ENCODE measurements at regions of chr1 and their contacts with region 1.

Region 1: GRCh38 chr1:201119206-201120197 is 7.3 kb upstream of the CACNA1S start:
- DNase-seq: peak; percentile 53
- CTCF ChIP-seq: peak; percentile 53

Region 2: DNA sequence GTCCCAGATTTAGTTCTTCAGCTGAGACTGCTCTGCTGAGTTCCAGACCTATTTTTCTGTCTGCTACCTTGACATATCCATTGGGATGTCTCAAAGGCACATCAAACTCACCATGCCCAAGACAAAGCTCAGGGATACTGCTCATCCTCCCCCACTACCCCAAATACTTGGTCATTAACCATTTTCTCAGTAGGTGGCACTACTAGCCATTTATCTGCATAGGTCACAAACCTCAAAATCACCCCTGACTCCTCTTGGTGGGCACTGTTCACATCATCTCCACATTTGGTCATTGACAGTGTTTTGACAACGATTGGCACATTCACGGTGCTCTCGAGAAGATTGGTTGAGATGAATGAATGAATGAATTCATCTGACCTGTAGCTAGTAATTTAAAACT is 39.4 kb before region 1 on chr1:
- CTCF ChIA-PET with region 1: interaction called, 59 read pairs
- POLR2A ChIA-PET with region 1: no interaction called
- DNase-seq: no peak
- CTCF ChIP-seq: no peak

Region 3: GRCh38 chr1:201108614-201109013 is 10.9 kb before region 1 on chr1:
- CTCF ChIA-PET with region 1: interaction called, 12 read pairs
- POLR2A ChIA-PET with region 1: no interaction called
- DNase-seq: no peak
- CTCF ChIP-seq: no peak

Region 4: DNA sequence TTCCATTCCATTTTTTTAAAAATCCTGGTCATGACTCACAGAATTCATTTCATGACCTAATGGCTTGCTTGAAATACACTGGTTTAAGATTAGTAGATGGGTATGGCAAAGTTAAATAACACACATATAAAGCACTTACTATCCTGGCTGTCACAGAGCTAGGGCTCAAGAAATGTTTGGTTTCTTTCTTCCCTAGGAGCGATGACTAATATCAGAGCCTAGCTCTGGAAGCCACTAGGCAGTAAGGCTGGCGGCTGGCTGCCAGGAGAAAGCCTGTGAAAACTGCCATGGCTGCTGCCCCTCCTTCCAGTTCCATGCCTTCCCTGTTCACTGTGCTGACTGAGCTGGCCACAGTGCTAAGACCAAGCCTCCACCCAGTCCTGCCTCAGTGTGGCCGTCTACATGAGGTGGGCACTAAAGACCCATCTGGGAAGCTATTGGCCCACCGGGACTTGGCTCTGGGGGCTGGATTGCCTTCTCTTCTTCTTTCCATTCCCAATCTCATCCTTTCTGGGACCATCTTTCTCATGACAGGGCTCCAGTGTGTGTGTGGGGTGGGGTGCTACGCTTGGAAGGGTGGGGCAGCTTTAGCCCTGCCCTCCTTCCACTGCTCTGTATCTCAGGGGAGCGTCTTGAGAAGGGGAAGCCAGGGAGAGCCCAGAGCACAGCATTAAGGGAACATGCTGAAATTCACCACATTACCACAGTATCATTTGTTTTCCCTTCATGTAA is 18.2 kb after region 1 on chr1:
- CTCF ChIA-PET with region 1: interaction called, 10 read pairs
- POLR2A ChIA-PET with region 1: no interaction called
- DNase-seq: no peak
- CTCF ChIP-seq: no peak

Measured in GM10248 (cell line).